Activated CD4-positive, alpha-beta memory T cell treated with anti-CD3 and anti-CD28 coated beads for 36 hours (primary cell): ENCODE measurements at regions of chr1 and their contacts with region 1.

Region 1: DNA sequence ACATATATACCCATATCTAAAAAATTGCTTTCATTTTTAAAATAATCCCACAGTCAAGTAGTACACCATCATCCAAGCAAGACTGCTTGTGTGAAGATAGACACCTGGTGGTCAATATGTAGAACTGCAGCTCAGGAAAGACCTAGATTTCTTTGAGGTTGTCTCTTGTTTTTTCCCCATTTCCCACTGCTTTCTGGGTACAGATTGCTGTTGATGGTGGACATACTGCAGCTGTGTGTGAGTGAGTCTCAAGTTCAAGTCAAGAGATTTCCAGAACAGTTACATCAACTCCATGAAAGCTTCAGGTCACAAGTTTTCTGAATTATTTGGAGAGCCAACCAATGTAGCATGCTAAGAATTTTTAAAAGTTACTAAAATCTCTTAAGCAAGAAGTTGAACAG is 306.4 kb downstream of the DUSP10 start:
- DNase-seq: no peak
- H3K4me3 Mint-ChIP-seq: no peak overlapping the region
- H3K27ac Mint-ChIP-seq: no peak overlapping the region
- H3K4me1 Mint-ChIP-seq: peaks cover 30% of the 10 kb centered on the region
- H3K27me3 Mint-ChIP-seq: peaks cover 6% of the 10 kb centered on the region

Region 2: GRCh38 chr1:220879076-220879508 is 556.4 kb before region 1 on chr1 and contains the start of gene HLX:
- CTCF ChIA-PET with region 1: interaction called, 3 read pairs
- POLR2A ChIA-PET with region 1: no interaction called
- intact Hi-C with region 1: loop called (anchors 1 kb)
- DNase-seq: peak; percentile 39
- H3K4me3 Mint-ChIP-seq: peak within 1 kb of the TSS; percentile 50
- H3K27ac Mint-ChIP-seq: no peak within 1 kb of the TSS
- H3K4me1 Mint-ChIP-seq: peaks cover 34% of the 10 kb centered on the region
- H3K27me3 Mint-ChIP-seq: peaks cover 74% of the 10 kb centered on the region
- total RNA-seq, gene HLX: 0.19 TPM in 1 of 2 experiments, not detected in the other

Region 3: DNA sequence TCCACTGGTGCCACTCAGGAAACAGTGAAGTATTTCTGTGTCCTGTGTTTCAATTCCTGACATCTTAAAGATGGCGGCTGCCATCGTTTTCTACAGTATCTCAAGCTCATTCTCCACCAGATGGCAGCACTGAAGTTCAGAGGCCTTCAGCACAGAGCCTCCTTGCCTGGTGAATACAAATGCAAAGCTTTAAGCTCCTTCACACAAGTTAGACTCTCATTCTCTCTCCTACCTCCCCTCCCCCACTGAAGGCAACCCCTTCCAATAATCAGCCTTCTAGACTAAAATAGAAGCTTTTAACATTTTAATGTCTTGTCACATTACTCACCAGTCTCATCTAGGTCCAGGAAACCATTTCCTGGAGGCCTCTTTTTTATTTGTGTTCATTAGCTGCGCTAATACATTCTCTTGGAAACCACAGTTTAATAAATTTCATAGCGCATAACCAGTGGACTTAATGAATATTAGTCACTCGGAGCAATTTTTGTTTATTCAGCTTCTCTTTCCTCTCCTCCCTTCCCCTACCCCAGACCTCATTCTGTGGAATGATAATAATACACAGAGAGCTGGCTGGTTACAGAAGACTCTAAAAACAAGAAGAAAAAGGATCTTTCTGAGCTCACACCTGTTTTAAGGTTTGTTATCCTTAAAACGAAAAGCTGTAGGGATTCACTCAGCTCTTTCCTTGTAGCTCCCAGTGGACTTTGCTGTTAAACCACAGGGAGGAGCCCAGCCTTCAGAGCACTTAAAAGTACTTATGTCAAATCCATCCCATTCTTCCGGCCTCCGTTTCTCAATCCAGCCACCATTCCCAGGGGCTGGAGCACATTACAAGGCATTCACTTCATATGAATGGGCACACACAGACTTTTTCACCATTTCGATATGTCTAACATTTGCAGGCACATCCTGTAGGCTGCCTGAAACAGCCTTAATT is 171.4 kb before region 1 on chr1:
- CTCF ChIA-PET with region 1: interaction called, 59 read pairs
- POLR2A ChIA-PET with region 1: no interaction called
- intact Hi-C with region 1: loop called (anchors 1 kb)
- DNase-seq: peak; percentile 38
- H3K4me3 Mint-ChIP-seq: no peak overlapping the region
- H3K27ac Mint-ChIP-seq: no peak overlapping the region
- H3K4me1 Mint-ChIP-seq: no peaks in the 10 kb centered on the region
- H3K27me3 Mint-ChIP-seq: peaks cover 3% of the 10 kb centered on the region

Region 4: GRCh38 chr1:221708987-221709386 is 273.5 kb after region 1 on chr1:
- CTCF ChIA-PET with region 1: no interaction called
- POLR2A ChIA-PET with region 1: interaction called, 3 read pairs
- intact Hi-C with region 1: loop called (anchors 1 kb)
- DNase-seq: peak; percentile 63
- H3K4me3 Mint-ChIP-seq: peak overlapping the region; percentile 26
- H3K27ac Mint-ChIP-seq: peak overlapping the region; percentile 86
- H3K4me1 Mint-ChIP-seq: peaks cover 60% of the 10 kb centered on the region
- H3K27me3 Mint-ChIP-seq: no peaks in the 10 kb centered on the region

Region 5: DNA sequence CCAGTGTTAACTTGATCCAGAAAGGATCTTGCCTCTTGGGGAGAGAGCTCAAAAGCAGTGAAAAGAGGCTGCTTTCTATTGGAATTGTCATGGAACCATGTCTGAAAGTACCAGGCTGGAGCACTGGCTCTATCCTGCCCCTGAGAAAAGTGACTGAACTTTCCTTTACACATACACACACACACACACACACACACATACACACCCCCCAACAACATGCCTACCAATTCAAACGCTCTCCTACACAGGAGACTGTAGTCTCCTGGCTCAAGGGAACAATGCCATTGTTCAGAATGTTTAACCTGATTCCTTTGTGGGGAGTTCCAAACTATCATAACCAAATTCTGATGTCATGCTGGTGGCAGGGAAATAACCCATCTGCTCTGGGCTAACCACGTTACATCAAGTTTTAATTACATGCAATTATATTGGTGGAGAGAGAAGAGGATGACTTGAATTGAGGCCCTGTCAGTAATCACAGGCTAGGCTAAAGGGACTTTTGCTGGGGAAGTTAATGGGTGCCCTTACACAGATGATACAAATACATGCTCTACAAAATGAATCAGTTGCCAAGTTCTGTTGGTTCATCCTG is 358.7 kb after region 1 on chr1:
- CTCF ChIA-PET with region 1: interaction called, 3 read pairs
- POLR2A ChIA-PET with region 1: no interaction called
- intact Hi-C with region 1: loop called (anchors 5 kb)
- DNase-seq: peak; percentile 56
- H3K4me3 Mint-ChIP-seq: no peak overlapping the region
- H3K27ac Mint-ChIP-seq: peak overlapping the region; percentile 84
- H3K4me1 Mint-ChIP-seq: peaks cover 41% of the 10 kb centered on the region
- H3K27me3 Mint-ChIP-seq: no peaks in the 10 kb centered on the region